Natural killer cell (primary cell): ENCODE measurements at regions of chr14 and their contacts with region 1.

Region 1: GRCh38 chr14:77320238-77320935 is at the start of gene POMT2:
- DNase-seq: peak; percentile 92 to 95
- ATAC-seq: peak; percentile 51 to 77 (median 66)
- H3K4me3 ChIP-seq: peak within 1 kb of the TSS; percentile 63
- H3K4me3 Mint-ChIP-seq: peak within 1 kb of the TSS; percentile 97
- H3K27ac ChIP-seq: peak within 1 kb of the TSS; percentile 88
- H3K27ac Mint-ChIP-seq: peak within 1 kb of the TSS; percentile 96 to 97
- H3K4me1 ChIP-seq: peaks cover 11% of the 10 kb centered on the region
- H3K4me1 Mint-ChIP-seq: peaks cover 13 to 14% of the 10 kb centered on the region in 2 donors
- H3K27me3 ChIP-seq: no peaks in the 10 kb centered on the region
- H3K27me3 Mint-ChIP-seq: no peaks in the 10 kb centered on the region
- CTCF ChIP-seq: peak; percentile 37
- total RNA-seq, gene POMT2: 6.7 to 10.9 (median 8.6) TPM

Region 2: DNA sequence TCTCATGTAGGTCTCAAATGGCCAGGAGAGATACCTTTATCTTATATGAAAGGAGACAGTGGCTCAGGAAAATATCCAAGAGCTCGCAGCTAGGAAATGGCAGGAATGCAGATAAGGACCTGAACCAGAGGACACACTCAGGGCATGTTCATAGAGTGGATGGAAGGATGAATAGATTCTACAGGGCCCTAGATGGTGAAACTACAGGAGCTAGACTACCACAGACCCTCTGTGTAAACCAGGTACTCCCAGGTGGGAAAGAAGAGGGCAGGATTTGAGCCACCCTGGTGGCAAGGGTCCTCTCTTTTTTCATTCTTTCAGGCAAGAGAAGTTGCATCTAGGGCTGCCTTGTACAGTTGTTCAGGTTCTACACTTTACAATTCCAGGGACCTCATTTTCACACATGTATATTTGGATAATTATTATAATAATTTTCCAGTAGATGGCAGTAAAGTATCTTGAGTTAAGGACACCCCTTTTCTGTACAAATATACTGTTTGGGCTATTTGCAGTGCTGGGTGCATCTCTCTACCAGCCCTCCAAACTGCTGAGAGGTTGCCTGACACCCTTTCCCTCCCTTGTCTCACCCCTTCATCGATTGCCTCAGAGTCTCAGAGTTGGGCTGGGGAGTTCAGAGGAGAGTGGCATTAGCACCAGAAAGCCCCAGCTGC is 168.3 kb before region 1 on chr14:
- intact Hi-C with region 1: loop called (anchors 1 kb)
- DNase-seq: peak in 1 of 2 donors; percentile 33
- ATAC-seq: peak in 1 of 3 donors; percentile 38
- H3K4me3 ChIP-seq: no peak overlapping the region
- H3K4me3 Mint-ChIP-seq: no peak overlapping the region
- H3K27ac ChIP-seq: no peak overlapping the region
- H3K27ac Mint-ChIP-seq: no peak overlapping the region
- H3K4me1 ChIP-seq: no peaks in the 10 kb centered on the region
- H3K4me1 Mint-ChIP-seq: no peaks in the 10 kb centered on the region
- H3K27me3 ChIP-seq: peaks cover 4% of the 10 kb centered on the region
- H3K27me3 Mint-ChIP-seq: peaks cover 9 to 50% of the 10 kb centered on the region in 2 donors
- CTCF ChIP-seq: no peak

Region 3: GRCh38 chr14:77260631-77261030 is 59.8 kb before region 1 on chr14:
- intact Hi-C with region 1: no loop called
- DNase-seq: no peak
- ATAC-seq: no peak
- H3K4me3 ChIP-seq: no peak overlapping the region
- H3K4me3 Mint-ChIP-seq: no peak overlapping the region
- H3K27ac ChIP-seq: no peak overlapping the region
- H3K27ac Mint-ChIP-seq: no peak overlapping the region
- H3K4me1 ChIP-seq: no peaks in the 10 kb centered on the region
- H3K4me1 Mint-ChIP-seq: no peaks in the 10 kb centered on the region
- H3K27me3 ChIP-seq: no peaks in the 10 kb centered on the region
- H3K27me3 Mint-ChIP-seq: peaks cover 12 to 21% of the 10 kb centered on the region in 2 donors
- CTCF ChIP-seq: no peak

Region 4: DNA sequence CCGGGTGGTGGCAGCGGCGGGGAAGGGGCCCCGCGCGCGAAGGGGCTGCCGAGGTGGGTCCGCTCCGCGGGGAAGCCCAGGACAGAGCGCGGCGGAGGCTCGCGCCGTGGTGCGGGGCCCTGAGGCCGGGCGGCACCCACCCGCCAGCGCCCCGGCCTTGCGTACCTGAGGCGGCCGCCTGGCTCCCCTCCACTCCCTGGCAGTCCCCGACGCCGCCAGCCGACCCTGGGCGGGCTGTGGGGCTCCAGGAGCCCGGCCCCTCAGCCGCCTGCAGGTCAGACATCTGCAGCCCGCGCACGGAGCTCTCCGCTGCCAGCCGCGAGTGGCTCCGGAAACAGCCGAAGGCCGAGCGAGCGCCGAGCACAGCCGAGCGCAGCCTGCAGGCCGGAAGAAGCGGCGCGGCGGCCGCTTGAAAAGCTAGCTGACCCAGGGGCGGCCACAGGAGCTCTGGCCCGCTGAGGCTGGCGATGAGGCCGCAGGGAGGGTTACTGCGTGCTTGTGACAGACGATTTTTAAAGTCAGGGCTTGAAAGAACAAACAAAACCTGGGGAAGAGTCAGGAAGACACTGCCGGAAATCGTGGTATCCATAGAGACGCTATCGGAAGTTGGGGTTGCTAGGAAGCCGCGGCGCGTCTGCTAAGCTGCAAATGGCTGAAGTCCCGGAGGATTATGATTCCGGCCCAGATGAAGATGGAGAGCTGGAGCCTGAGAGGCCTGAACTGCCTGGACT is 56.5 kb after region 1 on chr14 and contains the starts of genes SAMD15 and TMED8:
- intact Hi-C with region 1: loop called (anchors 2 kb)
- DNase-seq: peak; percentile 85 to 91
- ATAC-seq: peak; percentile 96 to 98 (median 97)
- H3K4me3 ChIP-seq: peak within 1 kb of the TSS; percentile 96
- H3K4me3 Mint-ChIP-seq: peak within 1 kb of the TSS; percentile 94
- H3K27ac ChIP-seq: peak within 1 kb of the TSS; percentile 74
- H3K27ac Mint-ChIP-seq: no peak within 1 kb of the TSS
- H3K4me1 ChIP-seq: peaks cover 13% of the 10 kb centered on the region
- H3K4me1 Mint-ChIP-seq: peaks cover 26 to 28% of the 10 kb centered on the region in 2 donors
- H3K27me3 ChIP-seq: no peaks in the 10 kb centered on the region
- H3K27me3 Mint-ChIP-seq: peaks cover 0 to 2% of the 10 kb centered on the region in 2 donors
- CTCF ChIP-seq: no peak
- total RNA-seq, gene SAMD15: 0.09 to 0.54 (median 0.40) TPM
- total RNA-seq, gene TMED8: 8.0 to 9.3 (median 9.1) TPM

Region 5: GRCh38 chr14:77707724-77708408 is 387.5 kb after region 1 on chr14 and contains the starts of genes ALKBH1 and SLIRP:
- intact Hi-C with region 1: loop called (anchors 2 kb)
- DNase-seq: peak; percentile 82 to 93
- ATAC-seq: peak; percentile 97 to 99 (median 98)
- H3K4me3 ChIP-seq: peak within 1 kb of the TSS; percentile 88
- H3K4me3 Mint-ChIP-seq: peak within 1 kb of the TSS; percentile 97
- H3K27ac ChIP-seq: peak within 1 kb of the TSS; percentile 30
- H3K27ac Mint-ChIP-seq: peak within 1 kb of the TSS; percentile 89 to 91
- H3K4me1 ChIP-seq: peaks cover 13% of the 10 kb centered on the region
- H3K4me1 Mint-ChIP-seq: peaks cover 32 to 37% of the 10 kb centered on the region in 2 donors
- H3K27me3 ChIP-seq: no peaks in the 10 kb centered on the region
- H3K27me3 Mint-ChIP-seq: no peaks in the 10 kb centered on the region
- CTCF ChIP-seq: no peak
- total RNA-seq, gene ALKBH1: 3.6 to 10.2 (median 7.1) TPM
- total RNA-seq, gene SLIRP: 29.5 to 33.1 (median 31.6) TPM

Region 6: DNA sequence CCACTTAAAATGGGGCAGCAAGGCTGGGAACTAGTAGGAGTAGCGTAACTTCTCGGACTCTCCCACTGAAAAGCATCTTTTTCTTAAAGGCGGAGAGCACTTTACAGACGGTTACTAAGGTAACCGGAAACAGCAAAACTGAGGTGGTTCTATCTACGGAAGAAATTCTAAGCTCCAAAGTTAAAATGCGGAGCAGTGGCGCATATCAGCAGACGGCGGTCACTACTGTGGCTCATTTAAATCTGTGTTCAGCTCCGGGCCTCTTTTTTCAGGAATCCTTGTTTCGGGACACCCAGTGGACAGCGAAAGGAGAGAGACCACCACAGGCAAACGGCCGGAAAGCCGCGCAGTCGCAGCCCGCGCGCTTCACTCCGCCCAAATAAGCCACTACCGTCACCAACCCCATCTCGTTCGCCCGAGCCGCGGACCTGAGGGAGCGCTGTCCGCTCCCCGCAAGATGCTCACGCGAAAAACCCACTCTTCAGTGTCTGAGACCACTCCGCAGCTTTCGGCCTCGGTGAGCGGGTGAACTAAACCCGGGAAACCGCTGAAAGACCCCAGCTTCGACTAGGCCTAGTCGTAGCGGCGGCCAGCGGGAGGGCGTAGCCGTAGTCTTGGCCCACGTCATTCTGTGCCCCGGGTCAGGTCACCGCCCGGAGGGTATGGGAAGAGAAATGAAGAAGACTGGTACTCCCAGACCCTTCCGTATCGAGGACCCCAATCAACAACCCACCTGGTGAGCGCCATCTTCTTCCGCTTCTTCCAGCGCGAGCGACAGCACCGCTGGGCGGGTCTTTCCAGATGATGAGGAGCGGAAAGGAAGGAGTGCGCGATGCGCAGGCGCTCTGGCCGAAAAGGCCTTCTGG is 440.2 kb after region 1 on chr14 and contains the start of gene SNW1:
- intact Hi-C with region 1: loop called (anchors 1 kb)
- DNase-seq: peak; percentile 81 to 98
- ATAC-seq: peak; percentile 90 to 95 (median 92)
- H3K4me3 ChIP-seq: peak within 1 kb of the TSS; percentile 81
- H3K4me3 Mint-ChIP-seq: peak within 1 kb of the TSS; percentile 94
- H3K27ac ChIP-seq: peak within 1 kb of the TSS; percentile 96
- H3K27ac Mint-ChIP-seq: peak within 1 kb of the TSS; percentile 95 to 97
- H3K4me1 ChIP-seq: peaks cover 26% of the 10 kb centered on the region
- H3K4me1 Mint-ChIP-seq: peaks cover 32 to 41% of the 10 kb centered on the region in 2 donors
- H3K27me3 ChIP-seq: no peaks in the 10 kb centered on the region
- H3K27me3 Mint-ChIP-seq: no peaks in the 10 kb centered on the region
- CTCF ChIP-seq: no peak
- total RNA-seq, gene SNW1: 89.7 to 106 (median 103) TPM